PC-9 (cell line): ENCODE measurements at regions of chr3 and their contacts with region 1.

Region 1: DNA sequence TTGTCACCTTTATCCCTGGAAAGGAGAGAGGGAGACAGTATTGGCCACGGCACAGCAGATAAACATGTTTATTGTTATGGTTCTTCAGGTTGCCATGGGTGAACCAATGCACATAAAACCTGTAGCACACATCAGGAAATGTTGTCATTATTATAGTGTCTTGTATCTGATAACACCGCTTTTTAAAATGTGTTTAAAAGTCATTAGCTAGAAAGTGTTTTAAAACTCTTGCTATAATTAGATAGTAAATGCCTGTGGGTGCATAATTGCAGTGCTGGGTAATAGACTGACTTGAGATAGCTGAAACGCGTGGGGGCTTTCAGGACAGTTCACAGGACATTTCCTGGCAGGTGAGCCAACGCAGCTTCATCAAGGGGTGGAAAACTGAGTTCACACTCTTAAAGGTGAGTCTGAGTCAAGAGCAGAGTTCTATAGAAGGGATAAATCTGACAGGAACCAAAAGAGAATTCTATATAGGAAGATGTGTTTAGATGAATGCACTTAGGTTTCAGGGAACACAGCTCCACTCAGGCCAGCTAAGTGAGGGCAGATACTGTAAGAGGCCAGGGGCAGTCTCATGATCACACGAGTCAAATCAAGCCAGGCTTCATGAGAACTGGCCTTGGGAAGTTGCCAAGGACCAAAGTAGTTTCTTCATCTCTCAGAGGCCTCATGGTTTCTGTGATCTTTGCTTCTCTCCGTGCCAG is 35.6 kb upstream of the PPP4R2 start:
- DNase-seq: peak in 1 of 2 experiments; percentile 54
- H3K4me3 ChIP-seq: no peak overlapping the region
- H3K27ac ChIP-seq: no peak overlapping the region
- H3K4me1 ChIP-seq: no peaks in the 10 kb centered on the region
- H3K27me3 ChIP-seq: no peaks in the 10 kb centered on the region
- CTCF ChIP-seq: no peak

Region 2: DNA sequence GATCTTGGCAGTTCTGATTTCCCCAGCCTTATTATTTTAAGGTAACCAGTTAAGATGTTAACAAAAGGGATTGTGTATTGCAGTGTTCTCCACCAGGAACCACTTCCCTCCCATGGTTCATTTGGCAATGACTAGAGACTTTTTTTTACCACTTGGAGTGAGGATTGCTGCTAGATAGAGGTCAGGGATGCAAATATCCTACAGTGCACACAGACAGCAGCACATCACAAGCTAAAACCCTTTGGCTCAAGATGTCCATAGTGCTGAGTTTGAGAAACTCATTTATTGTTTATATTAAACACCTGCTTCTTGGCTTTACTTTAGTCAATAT is 76.4 kb after region 1 on chr3:
- CTCF ChIA-PET with region 1: no interaction called
- POLR2A ChIA-PET with region 1: no interaction called
- intact Hi-C with region 1: no loop called
- DNase-seq: no peak
- H3K4me3 ChIP-seq: no peak overlapping the region
- H3K27ac ChIP-seq: peak overlapping the region; percentile 19; the same call in 1 of the 2 replicates
- H3K4me1 ChIP-seq: 0 out of 2 replicates have a peak, but pooled peaks cover 4% of the 10 kb centered on the region
- H3K27me3 ChIP-seq: no peaks in the 10 kb centered on the region
- CTCF ChIP-seq: no peak

Region 3: GRCh38 chr3:73086071-73086494 is 125.1 kb after region 1 on chr3:
- CTCF ChIA-PET with region 1: no interaction called
- POLR2A ChIA-PET with region 1: no interaction called
- intact Hi-C with region 1: no loop called
- DNase-seq: peak in 1 of 2 experiments; percentile 33
- H3K4me3 ChIP-seq: no peak overlapping the region
- H3K27ac ChIP-seq: no peak overlapping the region
- H3K4me1 ChIP-seq: no peaks in the 10 kb centered on the region
- H3K27me3 ChIP-seq: no peaks in the 10 kb centered on the region
- CTCF ChIP-seq: peak; percentile 79

Region 4: DNA sequence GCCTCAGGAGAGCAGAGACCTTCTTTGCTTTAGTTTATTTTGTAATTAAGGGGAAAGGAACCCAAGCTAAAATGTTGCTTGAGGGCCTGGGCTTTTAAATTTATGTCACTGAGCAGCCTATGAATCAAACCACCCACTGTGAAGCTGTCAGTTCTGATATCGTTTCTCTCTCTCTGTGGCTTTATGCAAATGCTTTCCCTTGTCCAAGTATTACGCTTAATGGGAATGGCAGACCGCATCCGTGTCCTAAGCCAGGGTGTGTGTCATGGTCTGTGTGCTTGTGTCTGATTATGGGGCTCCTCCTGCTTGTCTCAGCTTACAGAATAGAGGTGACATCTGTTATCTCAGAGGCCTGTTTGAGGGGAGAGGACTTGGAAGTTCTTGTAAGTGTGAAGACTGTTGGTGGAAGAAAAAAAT is 182.9 kb after region 1 on chr3:
- CTCF ChIA-PET with region 1: no interaction called
- POLR2A ChIA-PET with region 1: no interaction called
- intact Hi-C with region 1: no loop called
- DNase-seq: no peak
- H3K4me3 ChIP-seq: no peak overlapping the region
- H3K27ac ChIP-seq: no peak overlapping the region
- H3K4me1 ChIP-seq: no peaks in the 10 kb centered on the region
- H3K27me3 ChIP-seq: peaks cover 61% of the 10 kb centered on the region
- CTCF ChIP-seq: no peak

Region 5: DNA sequence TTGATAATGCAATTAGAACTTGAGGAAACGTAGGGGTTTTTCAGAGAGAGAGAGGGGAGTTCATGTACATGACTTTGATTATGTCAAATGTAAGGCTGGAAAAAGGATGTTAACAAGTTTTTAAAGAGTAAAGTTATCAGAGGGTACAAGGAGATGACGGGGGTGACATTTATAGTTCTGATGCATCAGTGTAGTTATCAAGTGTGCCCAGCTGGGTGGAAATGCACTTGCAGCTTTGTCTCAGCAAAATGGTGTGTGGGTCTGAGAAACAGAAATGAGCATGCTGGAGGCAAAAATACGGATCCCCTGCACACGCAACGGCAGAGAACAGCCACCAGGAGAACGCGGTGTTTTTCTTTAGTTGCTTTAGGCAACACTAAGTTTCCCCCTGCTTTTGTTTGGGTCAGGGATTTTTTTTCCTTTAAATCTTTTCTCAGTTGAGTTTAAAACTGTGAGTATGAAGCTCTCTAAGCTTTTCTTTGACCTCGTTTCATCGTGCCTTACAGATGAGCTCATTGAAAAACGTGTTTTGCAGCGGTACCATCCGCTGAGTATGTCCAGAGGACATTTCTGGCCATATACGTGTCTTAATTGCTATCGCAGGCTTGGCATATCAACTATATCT is 458.3 kb after region 1 on chr3:
- CTCF ChIA-PET with region 1: no interaction called
- POLR2A ChIA-PET with region 1: interaction called, 13 read pairs
- intact Hi-C with region 1: no loop called
- DNase-seq: no peak
- H3K4me3 ChIP-seq: no peak overlapping the region
- H3K27ac ChIP-seq: no peak overlapping the region
- H3K4me1 ChIP-seq: no peaks in the 10 kb centered on the region
- H3K27me3 ChIP-seq: no peaks in the 10 kb centered on the region
- CTCF ChIP-seq: no peak